A549 (cell line): ENCODE measurements at regions of chr3 and their contacts with region 1.

Region 1: DNA sequence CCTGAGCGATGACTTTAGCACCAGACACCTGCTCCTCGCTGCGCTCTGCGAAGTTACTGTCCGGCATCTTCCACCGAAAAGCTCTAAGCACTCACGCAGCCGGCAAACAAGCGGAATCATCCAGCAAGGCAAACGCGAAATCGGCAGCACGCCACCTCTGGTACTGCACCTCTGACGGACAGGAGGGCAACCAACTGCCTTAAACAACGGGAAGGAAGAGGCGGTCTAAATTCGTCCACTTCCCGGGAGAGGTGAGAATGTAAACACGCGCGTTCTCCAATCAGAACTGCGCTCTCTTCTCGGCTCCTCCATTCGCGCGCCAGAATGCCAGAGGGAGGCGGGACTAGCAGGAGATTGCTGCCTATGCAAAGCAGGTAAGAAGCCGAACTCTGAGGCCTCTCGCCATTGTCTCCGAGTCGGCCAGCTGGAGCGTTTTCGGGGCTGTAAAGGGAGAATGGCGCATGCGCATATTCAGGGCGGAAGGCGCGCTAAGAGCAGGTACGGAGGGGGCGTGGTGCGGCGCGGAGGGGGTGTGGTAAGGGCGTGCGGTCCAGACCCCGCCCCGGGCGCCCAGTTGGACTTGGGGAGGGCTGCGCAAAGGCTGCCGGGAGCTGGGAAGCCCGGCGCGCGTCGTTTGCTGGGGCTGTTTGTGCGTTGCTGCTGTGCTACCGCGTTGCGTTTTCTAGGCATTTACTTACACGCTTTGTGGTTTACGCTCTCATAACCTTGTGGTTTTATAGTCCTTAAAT is at the starts of genes BTD and HACL1:
- DNase-seq: peak; percentile 95 to 99
- ATAC-seq: peak; percentile 98
- H3K4me3 ChIP-seq: peak within 1 kb of the TSS; percentile 65
- H3K27ac ChIP-seq: peak within 1 kb of the TSS; percentile 70 to 91
- H3K4me1 ChIP-seq: peaks cover 15% of the 10 kb centered on the region
- CTCF ChIP-seq: no peak
- EP300 ChIP-seq: no peak
- POLR2A ChIP-seq: peak; percentile 97
- RAD21 ChIP-seq: no peak
- polyA plus RNA-seq, gene BTD: 17.8 and 23.7 TPM in 2 replicates
- polyA plus RNA-seq, gene HACL1: 51.0 and 69.0 TPM in 2 replicates

Region 2: GRCh38 chr3:15797642-15798303 is 196.2 kb after region 1 on chr3 and contains the start of gene ANKRD28:
- CTCF ChIA-PET with region 1: no interaction called
- POLR2A ChIA-PET with region 1: interaction called, 10 read pairs
- DNase-seq: peak; percentile 45 to 89
- ATAC-seq: peak; percentile 90
- H3K4me3 ChIP-seq: peak within 1 kb of the TSS; percentile 45
- H3K27ac ChIP-seq: peak within 1 kb of the TSS; percentile 89 to 92
- H3K4me1 ChIP-seq: peaks cover 45% of the 10 kb centered on the region
- CTCF ChIP-seq: no peak
- EP300 ChIP-seq: peak; percentile 35 to 70; a peak in 3 of 5 replicates
- POLR2A ChIP-seq: no peak
- RAD21 ChIP-seq: peak; percentile 20 to 48; a peak in 4 of 5 replicates
- polyA plus RNA-seq, gene ANKRD28: 72.0 and 73.2 TPM in 2 replicates